ENCODE measurements at regions of chr18 and their contacts with region 1.

Region 1: GRCh38 chr18:23225503-23225902 is 90.2 kb downstream of the CABLES1 start:
- DNase-seq: no peak
- ATAC-seq: no peak
- H3K4me3 ChIP-seq: no peak overlapping the region
- H3K27ac ChIP-seq: peak overlapping the region; percentile 70
- H3K4me1 ChIP-seq: peaks cover 58% of the 10 kb centered on the region
- H3K27me3 ChIP-seq: no peaks in the 10 kb centered on the region
- CTCF ChIP-seq: no peak
- EP300 ChIP-seq: no peak
- POLR2A ChIP-seq: no peak
- RAD21 ChIP-seq: no peak

Region 2: DNA sequence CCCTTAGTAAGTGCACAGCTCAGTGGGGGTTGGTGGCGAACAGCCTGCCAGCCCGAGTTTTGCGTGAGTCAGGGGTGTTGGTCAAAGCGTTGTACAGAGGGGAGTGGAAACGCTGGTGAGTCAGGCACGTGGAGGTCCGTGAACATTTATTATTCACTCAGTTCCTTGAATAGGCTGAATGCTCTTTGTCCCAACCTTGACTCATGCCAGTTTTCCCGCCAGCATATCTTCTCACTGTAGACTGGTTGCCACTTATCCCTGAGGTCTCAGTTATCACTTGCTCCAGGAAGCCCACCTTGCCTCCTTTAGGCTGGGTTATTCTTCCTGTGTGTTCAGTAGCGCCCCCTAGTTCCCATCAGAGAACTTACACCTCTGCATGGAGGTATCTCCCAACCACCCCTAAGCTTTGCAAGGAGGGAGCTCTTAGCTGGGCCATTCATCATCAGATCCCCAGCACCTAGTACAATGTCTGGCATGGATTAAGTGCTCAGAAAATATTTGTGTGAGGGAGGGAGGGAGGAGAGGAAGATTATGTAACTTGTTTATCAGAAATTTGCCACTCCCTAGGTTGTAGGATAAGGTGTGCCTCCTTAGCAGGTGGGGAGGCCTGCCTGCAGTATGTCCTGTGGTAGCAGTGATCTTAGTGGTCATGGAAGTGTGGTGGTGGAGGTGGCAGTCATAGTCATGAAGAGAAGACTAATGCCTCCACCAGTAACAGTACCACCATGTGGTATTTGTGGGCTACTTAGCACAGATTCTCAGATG is 18.1 kb before region 1 on chr18:
- CTCF ChIA-PET with region 1: interaction called, 58 read pairs
- POLR2A ChIA-PET with region 1: interaction called, 5 read pairs
- RAD21 ChIA-PET with region 1: interaction called, 10 read pairs
- SMC1A ChIA-PET with region 1: interaction called, 7 read pairs
- in situ Hi-C with region 1: no loop called
- intact Hi-C with region 1: no loop called
- DNase-seq: no peak
- ATAC-seq: peak; percentile 69
- H3K4me3 ChIP-seq: no peak overlapping the region
- H3K27ac ChIP-seq: no peak overlapping the region
- H3K4me1 ChIP-seq: no peaks in the 10 kb centered on the region
- H3K27me3 ChIP-seq: no peaks in the 10 kb centered on the region
- CTCF ChIP-seq: peak in 2 of 3 experiments; percentile 55 to 59; a peak in 4 of 6 replicates
- EP300 ChIP-seq: no peak
- POLR2A ChIP-seq: no peak
- RAD21 ChIP-seq: no peak

Region 3: DNA sequence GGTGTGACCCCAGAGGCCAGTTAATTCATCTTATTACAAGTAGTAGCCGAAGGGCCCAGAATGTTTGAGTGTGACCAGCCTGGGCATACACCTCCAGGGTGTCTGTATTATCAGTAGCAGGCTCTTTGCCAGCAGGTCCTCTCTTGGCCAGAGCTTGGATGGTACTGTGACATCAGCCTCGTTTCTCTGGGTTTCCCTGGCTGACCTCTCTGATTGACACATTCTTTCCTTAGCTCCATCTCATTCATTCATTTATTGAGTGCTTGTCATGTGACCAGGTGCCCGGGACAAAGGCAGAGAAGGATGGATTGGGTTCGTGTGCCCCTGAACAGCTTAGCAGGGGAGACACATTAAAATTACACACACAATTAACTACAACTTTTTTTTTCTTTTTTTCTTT is 10.1 kb before region 1 on chr18:
- CTCF ChIA-PET with region 1: interaction called, 4 read pairs
- POLR2A ChIA-PET with region 1: interaction called, 5 read pairs
- RAD21 ChIA-PET with region 1: interaction called, 6 read pairs
- SMC1A ChIA-PET with region 1: interaction called, 11 read pairs
- in situ Hi-C with region 1: no loop called
- intact Hi-C with region 1: no loop called
- DNase-seq: no peak
- ATAC-seq: no peak
- H3K4me3 ChIP-seq: no peak overlapping the region
- H3K27ac ChIP-seq: no peak overlapping the region
- H3K4me1 ChIP-seq: no peaks in the 10 kb centered on the region
- H3K27me3 ChIP-seq: no peaks in the 10 kb centered on the region
- CTCF ChIP-seq: no peak
- EP300 ChIP-seq: no peak
- POLR2A ChIP-seq: no peak
- RAD21 ChIP-seq: no peak